Activated naive CD8-positive, alpha-beta T cell treated with anti-CD3 and anti-CD28 coated beads, Interleukin-2, amount 10 ng/mL, durations not matched to agents 7 days and 5 days (primary cell): ENCODE measurements at regions of chr19 and their contacts with region 1.

Region 1: GRCh38 chr19:39846176-39846677 is at the start of gene FBL:
- DNase-seq: peak; percentile 100
- ATAC-seq: peak; percentile 96
- H3K4me3 Mint-ChIP-seq: peak within 1 kb of the TSS; percentile 91
- H3K27ac Mint-ChIP-seq: peak within 1 kb of the TSS; percentile 92
- H3K4me1 Mint-ChIP-seq: peaks cover 38% of the 10 kb centered on the region
- H3K27me3 Mint-ChIP-seq: peaks cover 2% of the 10 kb centered on the region
- total RNA-seq, gene FBL: 344 to 357 TPM

Region 2: GRCh38 chr19:39792999-39793546 is 53.2 kb before region 1 on chr19:
- POLR2A ChIA-PET with region 1: interaction called, 15 read pairs
- DNase-seq: peak; percentile 87
- ATAC-seq: peak; percentile 90
- H3K4me3 Mint-ChIP-seq: peak overlapping the region; percentile 79
- H3K27ac Mint-ChIP-seq: no peak overlapping the region
- H3K4me1 Mint-ChIP-seq: peaks cover 15% of the 10 kb centered on the region
- H3K27me3 Mint-ChIP-seq: peaks cover 23% of the 10 kb centered on the region

Region 3: DNA sequence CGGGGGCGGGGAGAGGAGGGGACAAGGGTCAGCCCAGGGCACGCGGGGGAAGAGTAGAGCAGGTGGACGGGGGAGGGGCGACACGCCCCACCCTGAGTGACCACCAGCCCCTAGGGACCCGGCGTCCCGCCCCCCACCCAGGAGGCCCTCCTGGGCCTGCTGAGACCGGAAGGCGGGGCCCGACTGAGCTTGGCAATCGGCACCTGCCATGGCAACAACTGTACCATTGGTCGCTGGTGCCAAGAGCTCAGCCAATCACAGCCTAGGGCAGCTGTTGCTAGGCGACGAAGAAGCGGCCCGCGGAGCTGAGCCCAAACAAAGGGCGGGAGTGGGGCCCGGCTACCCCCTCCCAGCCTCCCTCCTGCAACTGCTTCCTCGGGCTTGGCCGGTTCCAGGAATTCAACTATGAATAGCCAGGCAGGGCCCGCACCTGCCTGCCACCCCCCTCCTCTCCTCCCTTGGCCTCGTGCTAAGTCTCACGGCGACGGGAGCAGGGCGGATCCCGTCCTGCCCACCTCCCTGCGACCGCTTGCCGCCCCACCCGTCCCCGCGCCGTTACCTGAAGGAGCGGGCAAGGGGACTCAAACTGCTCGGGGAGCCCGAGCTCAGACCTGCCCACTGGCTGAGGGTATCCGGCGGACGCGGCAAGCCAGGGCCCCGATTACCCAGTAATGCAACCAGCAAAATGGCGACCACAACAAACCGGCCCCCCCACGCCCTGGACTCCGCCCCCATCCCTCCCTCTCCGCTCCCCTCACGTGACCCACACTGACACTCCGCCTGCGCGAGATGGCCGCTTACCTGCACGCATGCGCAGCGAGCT is 12.6 kb before region 1 on chr19 and contains the start of gene DYRK1B:
- POLR2A ChIA-PET with region 1: interaction called, 38 read pairs
- DNase-seq: peak; percentile 94
- ATAC-seq: peak; percentile 86
- H3K4me3 Mint-ChIP-seq: peak within 1 kb of the TSS; percentile 77
- H3K27ac Mint-ChIP-seq: peak within 1 kb of the TSS; percentile 91
- H3K4me1 Mint-ChIP-seq: peaks cover 27% of the 10 kb centered on the region
- H3K27me3 Mint-ChIP-seq: no peaks in the 10 kb centered on the region
- total RNA-seq, gene DYRK1B: 15.8 to 17.3 TPM